ENCODE measurements at regions of chr1 and their contacts with region 1.

Region 1: GRCh38 chr1:156767101-156767878 is at the start of gene PRCC:
- DNase-seq: peak; percentile 99
- H3K4me3 ChIP-seq: peak within 1 kb of the TSS; percentile 95
- CTCF ChIP-seq: no peak

Region 2: GRCh38 chr1:156583821-156584622 is 183.3 kb before region 1 on chr1:
- CTCF ChIA-PET with region 1: no interaction called
- POLR2A ChIA-PET with region 1: no interaction called
- DNase-seq: peak; percentile 40
- H3K4me3 ChIP-seq: no peak overlapping the region
- CTCF ChIP-seq: peak; percentile 81

Region 3: GRCh38 chr1:156740679-156741612 is 26.3 kb before region 1 on chr1 and contains the start of gene MRPL24:
- CTCF ChIA-PET with region 1: interaction called, 3 read pairs
- POLR2A ChIA-PET with region 1: interaction called, 21 read pairs
- DNase-seq: peak; percentile 96
- H3K4me3 ChIP-seq: peak within 1 kb of the TSS; percentile 93
- CTCF ChIP-seq: no peak

Region 4: DNA sequence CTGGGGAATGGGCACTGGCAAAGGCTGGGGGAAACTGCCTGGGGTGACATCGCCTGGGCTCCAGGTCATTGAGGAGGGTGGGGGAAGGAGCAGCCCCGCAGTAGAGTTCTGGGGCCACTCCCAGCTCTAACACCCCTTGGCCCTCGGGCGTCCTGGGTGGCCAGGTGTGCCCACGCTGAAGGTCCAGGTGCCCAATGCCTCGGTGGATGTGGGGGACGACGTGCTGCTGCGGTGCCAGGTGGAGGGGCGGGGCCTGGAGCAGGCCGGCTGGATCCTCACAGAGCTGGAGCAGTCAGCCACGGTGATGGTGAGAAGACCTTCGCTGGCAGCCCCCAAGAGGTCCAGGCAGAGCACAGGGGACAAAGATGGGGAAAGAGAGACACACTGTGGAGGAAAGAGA is 101.1 kb after region 1 on chr1:
- CTCF ChIA-PET with region 1: no interaction called
- POLR2A ChIA-PET with region 1: no interaction called
- DNase-seq: no peak
- H3K4me3 ChIP-seq: no peak overlapping the region
- CTCF ChIP-seq: no peak

Measured in AG04449 (cell line).